ENCODE measurements at regions of chr1 and their contacts with region 1.

Region 1: DNA sequence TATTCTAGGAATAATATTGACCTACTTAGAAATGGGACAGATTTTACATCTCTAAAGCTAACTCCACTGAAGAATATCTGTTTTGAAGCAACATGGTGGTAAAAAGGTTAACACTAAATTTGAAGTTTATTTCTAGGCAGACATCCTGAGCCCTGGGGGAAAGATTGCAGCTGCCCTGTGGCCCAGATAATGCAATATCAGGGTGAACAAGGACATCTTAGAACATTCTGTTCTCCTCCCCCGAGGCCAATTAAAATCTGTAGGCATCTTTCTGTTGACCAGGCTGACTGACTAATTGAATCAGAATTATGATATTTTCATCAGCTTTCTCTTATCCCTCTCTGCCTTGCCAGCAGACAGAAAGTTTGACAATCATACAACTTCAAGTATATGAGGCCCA is 149.8 kb upstream of the DUSP10 start:
- DNase-seq: no peak
- ATAC-seq: no peak
- H3K4me3 Mint-ChIP-seq: no peak overlapping the region
- H3K27ac Mint-ChIP-seq: no peak overlapping the region
- H3K4me1 Mint-ChIP-seq: peaks cover 17% of the 10 kb centered on the region
- H3K27me3 Mint-ChIP-seq: no peaks in the 10 kb centered on the region
- CTCF ChIP-seq: no peak

Region 2: DNA sequence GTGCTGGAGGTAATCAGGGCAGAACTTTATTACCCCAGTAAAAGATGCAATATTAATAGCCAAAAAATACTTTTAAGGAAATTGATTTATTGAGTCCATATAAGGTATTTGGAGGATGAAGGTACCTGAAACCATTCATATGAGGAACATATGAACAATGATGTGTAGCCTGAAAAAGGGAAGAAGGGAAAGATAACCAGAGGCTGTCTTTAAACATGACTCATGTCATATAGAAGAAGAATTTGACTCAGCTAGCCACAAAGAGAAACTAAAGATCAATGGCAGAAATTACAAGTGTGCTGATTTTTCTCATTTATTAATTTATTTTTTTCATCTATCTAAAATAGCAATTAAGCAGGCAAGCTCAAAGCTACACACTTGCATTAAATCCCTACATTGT is 13.6 kb before region 1 on chr1:
- CTCF ChIA-PET with region 1: no interaction called
- POLR2A ChIA-PET with region 1: no interaction called
- intact Hi-C with region 1: no loop called
- DNase-seq: no peak
- ATAC-seq: peak; percentile 36
- H3K4me3 Mint-ChIP-seq: no peak overlapping the region
- H3K27ac Mint-ChIP-seq: no peak overlapping the region
- H3K4me1 Mint-ChIP-seq: peaks cover 48% of the 10 kb centered on the region
- H3K27me3 Mint-ChIP-seq: no peaks in the 10 kb centered on the region
- CTCF ChIP-seq: no peak

Region 3: GRCh38 chr1:221939607-221940006 is 47.9 kb after region 1 on chr1:
- CTCF ChIA-PET with region 1: no interaction called
- POLR2A ChIA-PET with region 1: no interaction called
- intact Hi-C with region 1: loop called (anchors 2 kb)
- DNase-seq: peak; percentile 49
- ATAC-seq: peak; percentile 95
- H3K4me3 Mint-ChIP-seq: peak overlapping the region; percentile 66
- H3K27ac Mint-ChIP-seq: peak overlapping the region; percentile 79
- H3K4me1 Mint-ChIP-seq: peaks cover 41% of the 10 kb centered on the region
- H3K27me3 Mint-ChIP-seq: no peaks in the 10 kb centered on the region
- CTCF ChIP-seq: no peak

Measured in activated B cell treated with CpG ODN at 0.5 μM for 24 hours (primary cell).